ENCODE measurements at regions of chr9 and their contacts with region 1.

Region 1: DNA sequence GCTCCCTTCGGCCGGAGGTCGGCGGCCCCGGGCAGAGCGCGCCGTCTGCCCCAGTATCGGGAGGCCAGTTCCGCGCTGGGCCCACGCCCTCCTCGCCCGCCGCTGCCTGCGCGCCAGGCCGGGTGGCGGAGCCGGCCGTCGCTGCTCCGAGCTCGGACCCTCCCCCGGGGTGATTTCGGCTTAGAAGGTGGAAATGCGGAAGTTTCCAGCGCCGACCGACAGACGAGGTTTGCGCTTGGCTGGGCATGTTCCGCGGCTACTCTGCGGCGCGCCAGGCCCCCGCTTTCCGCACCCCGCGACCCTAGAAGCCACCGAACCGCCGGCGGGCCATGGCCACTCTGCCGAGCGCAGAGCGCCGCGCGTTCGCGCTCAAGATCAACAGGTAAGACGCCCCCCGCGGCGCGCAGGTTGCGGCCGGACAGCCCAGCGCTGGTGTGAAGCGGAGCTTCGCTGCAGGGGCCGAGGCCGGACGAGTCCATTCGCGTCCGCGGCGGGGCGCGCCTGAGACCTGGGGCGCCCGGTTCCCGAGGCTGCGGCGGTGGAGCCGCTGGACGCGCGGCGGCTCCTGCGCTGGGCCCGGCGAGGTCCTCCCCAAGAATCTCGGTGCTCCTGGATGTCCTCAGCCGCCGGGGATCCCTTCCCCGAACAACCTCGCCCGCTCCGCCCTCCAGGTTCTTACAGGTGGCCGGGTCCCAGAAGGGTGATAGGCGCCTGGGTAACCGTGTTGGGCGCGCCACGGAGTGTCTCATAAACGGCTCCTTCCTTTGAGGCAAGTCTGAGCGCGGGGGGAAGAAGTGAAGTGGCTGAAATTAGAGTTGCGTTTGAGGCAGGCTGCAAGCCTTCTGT is at the start of gene DOCK8:
- DNase-seq: peak; percentile 4 to 74 (median 35)
- ATAC-seq: peak; percentile 78
- H3K4me3 Mint-ChIP-seq: peak within 1 kb of the TSS; percentile 74 to 93 (median 88)
- H3K27ac Mint-ChIP-seq: peak within 1 kb of the TSS in 7 of 10 donors; percentile 27 to 86 (median 57)
- H3K4me1 Mint-ChIP-seq: peaks cover 1 to 31% (median 11%) of the 10 kb centered on the region in 4 donors
- H3K27me3 Mint-ChIP-seq: peaks cover 1 to 15% (median 13%) of the 10 kb centered on the region in 5 donors
- polyA plus RNA-seq, gene DOCK8: 41.5 to 52.2 (median 45.7) TPM

Region 2: GRCh38 chr9:272251-273213 is 57.7 kb after region 1 on chr9:
- POLR2A ChIA-PET with region 1: interaction called, 18 read pairs
- DNase-seq: peak; percentile 39 to 89 (median 76)
- ATAC-seq: peak; percentile 86 to 89
- H3K4me3 Mint-ChIP-seq: peak overlapping the region; percentile 76 to 98 (median 94)
- H3K27ac Mint-ChIP-seq: peak overlapping the region in 8 of 10 donors; percentile 90 to 99 (median 97)
- H3K4me1 Mint-ChIP-seq: peaks cover 12 to 70% (median 48%) of the 10 kb centered on the region in 4 donors
- H3K27me3 Mint-ChIP-seq: no peaks in the 10 kb centered on the region

Region 3: GRCh38 chr9:406886-407654 is 192.2 kb after region 1 on chr9:
- POLR2A ChIA-PET with region 1: no interaction called
- DNase-seq: no peak
- ATAC-seq: no peak
- H3K4me3 Mint-ChIP-seq: no peak overlapping the region
- H3K27ac Mint-ChIP-seq: peak overlapping the region in 2 of 10 donors; percentile 25 to 56
- H3K4me1 Mint-ChIP-seq: peaks cover 0 to 6% (median 0%) of the 10 kb centered on the region in 4 donors
- H3K27me3 Mint-ChIP-seq: no peaks in the 10 kb centered on the region

Measured in naive thymus-derived CD8-positive, alpha-beta T cell (primary cell).